Heart right ventricle (tissue), 16 donors: ENCODE measurements at regions of chr11 and their contacts with region 1.

Region 1: DNA sequence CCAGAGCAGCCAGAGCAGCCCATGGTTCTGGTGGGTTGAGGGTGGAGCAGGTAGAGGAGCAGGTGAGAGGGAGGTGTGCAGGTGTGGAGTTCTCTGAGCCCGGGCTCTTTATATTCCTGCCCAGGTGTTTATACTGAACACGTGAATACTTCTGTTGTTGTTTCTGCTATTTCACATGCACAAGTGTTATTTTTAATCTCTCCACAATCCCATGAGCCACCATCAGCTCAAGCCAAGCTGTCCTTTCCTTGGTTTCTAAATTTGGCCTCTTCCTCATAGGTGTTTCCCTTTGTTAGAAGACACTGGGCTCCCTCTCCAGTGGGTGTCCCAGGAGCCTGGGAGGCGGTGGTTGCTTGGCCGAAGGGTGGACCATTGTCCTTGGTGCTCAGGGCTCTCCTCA is at the start of gene KRTAP5-3:
- DNase-seq: no peak
- ATAC-seq: peak in 3 of 8 donors; percentile 31 to 37 (median 37)
- H3K4me3 ChIP-seq: no peak within 1 kb of the TSS
- H3K27ac ChIP-seq: no peak within 1 kb of the TSS
- H3K4me1 ChIP-seq: peaks cover 0 to 12% (median 6%) of the 10 kb centered on the region in 9 donors
- H3K27me3 ChIP-seq: peaks cover 0 to 40% (median 10%) of the 10 kb centered on the region in 7 donors
- CTCF ChIP-seq: no peak
- total RNA-seq, gene KRTAP5-3: not detected

Region 2: GRCh38 chr11:1654388-1655167 is 46.2 kb after region 1 on chr11:
- intact Hi-C with region 1: no loop called
- DNase-seq: no peak
- ATAC-seq: no peak
- H3K4me3 ChIP-seq: no peak overlapping the region
- H3K27ac ChIP-seq: no peak overlapping the region
- H3K4me1 ChIP-seq: peaks cover 0 to 6% (median 4%) of the 10 kb centered on the region in 9 donors
- H3K27me3 ChIP-seq: peaks cover 0 to 31% (median 11%) of the 10 kb centered on the region in 7 donors
- CTCF ChIP-seq: no peak

Region 3: GRCh38 chr11:2462908-2463765 is 854.8 kb after region 1 on chr11:
- intact Hi-C with region 1: loop called in 1 of 10 experiments (anchors 5 kb)
- DNase-seq: peak; percentile 79 to 81
- ATAC-seq: peak; percentile 63 to 92 (median 86)
- H3K4me3 ChIP-seq: peak overlapping the region in 3 of 10 donors; percentile 9 to 20 (median 13)
- H3K27ac ChIP-seq: peak overlapping the region; percentile 73 to 96 (median 90)
- H3K4me1 ChIP-seq: peaks cover 15 to 92% (median 54%) of the 10 kb centered on the region in 9 donors
- H3K27me3 ChIP-seq: no peaks in the 10 kb centered on the region
- CTCF ChIP-seq: no peak